Right ventricle myocardium inferior (tissue), 1 donor: ENCODE measurements at regions of chr7 and their contacts with region 1.

Region 1: GRCh38 chr7:136874238-136875032 is 6.0 kb downstream of the CHRM2 start:
- DNase-seq: no peak
- ATAC-seq: no peak

Region 2: DNA sequence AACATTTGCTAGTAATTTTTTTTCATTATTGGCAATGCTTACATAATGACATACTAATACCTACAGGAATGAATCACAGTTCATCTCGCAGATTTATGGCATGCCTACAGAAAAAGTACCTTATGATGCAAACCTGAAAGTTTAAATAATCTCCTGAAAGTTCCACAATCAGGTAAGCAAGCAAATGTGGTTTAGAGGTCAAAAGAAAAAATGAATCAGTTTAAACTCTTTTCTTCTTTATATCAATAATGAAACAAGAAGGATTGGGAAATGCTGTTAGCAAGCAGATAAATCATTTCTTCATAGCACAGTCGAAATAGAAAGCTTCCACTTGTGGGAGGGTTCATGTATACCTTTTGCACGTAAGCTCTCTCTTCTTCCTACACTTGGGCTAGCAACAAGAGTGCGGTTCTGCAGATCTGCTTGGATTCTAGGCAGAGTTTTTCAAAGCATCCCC is 843.5 kb before region 1 on chr7:
- intact Hi-C with region 1: loop called (anchors 5 kb)
- DNase-seq: no peak
- ATAC-seq: no peak

Region 3: GRCh38 chr7:136728945-136729344 is 145.5 kb before region 1 on chr7:
- intact Hi-C with region 1: no loop called
- DNase-seq: no peak
- ATAC-seq: no peak

Region 4: DNA sequence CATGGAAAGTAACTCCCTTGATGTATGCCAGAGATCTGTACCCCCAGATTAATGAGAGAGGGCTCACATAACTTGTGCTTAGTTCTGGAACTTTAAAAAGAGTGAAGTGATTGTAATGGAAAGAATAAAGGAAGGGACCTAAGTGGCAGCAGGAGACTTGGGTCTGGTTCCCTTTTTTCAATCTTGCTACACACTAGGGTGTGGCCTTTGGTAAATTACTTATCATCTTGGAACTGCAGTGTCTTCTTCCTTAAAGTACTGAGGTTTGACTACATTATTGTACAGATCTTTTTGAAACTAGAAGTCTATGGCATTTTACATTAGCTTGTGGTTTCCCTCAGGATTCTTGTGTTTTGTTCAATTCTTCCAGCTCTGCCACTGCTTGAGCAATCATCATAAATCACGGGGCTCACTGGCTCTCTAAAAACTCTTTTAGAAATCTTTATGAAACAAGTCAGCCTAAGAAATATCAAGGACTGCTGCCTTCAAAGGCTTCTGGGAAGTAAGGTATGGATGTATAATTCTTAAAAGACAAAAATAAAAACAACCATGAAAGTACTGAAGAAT is 28.5 kb before region 1 on chr7:
- intact Hi-C with region 1: no loop called
- DNase-seq: no peak
- ATAC-seq: no peak

Region 5: GRCh38 chr7:136911344-136911743 is 36.9 kb after region 1 on chr7:
- intact Hi-C with region 1: loop called (anchors 5 kb)
- DNase-seq: no peak
- ATAC-seq: no peak

Region 6: GRCh38 chr7:136941816-136942215 is 67.4 kb after region 1 on chr7:
- intact Hi-C with region 1: loop called (anchors 5 kb)
- DNase-seq: no peak
- ATAC-seq: no peak

Region 7: GRCh38 chr7:137006293-137006692 is 131.9 kb after region 1 on chr7:
- intact Hi-C with region 1: loop called (anchors 10 kb)
- DNase-seq: no peak
- ATAC-seq: peak; percentile 77